ENCODE measurements at regions of chr1 and their contacts with region 1.

Region 1: GRCh38 chr1:36420836-36421664 is 23.3 kb upstream of the LSM10 start:
- DNase-seq: peak; percentile 89 to 93
- ATAC-seq: peak; percentile 88 to 91 (median 88)
- H3K4me3 ChIP-seq: peak overlapping the region; percentile 29
- H3K27ac ChIP-seq: peak overlapping the region; percentile 83
- H3K4me1 ChIP-seq: peaks cover 23% of the 10 kb centered on the region
- H3K27me3 ChIP-seq: no peaks in the 10 kb centered on the region
- CTCF ChIP-seq: peak; percentile 96

Region 2: GRCh38 chr1:36099681-36100341 is 321.2 kb before region 1 on chr1:
- intact Hi-C with region 1: loop called (anchors 2 to 10 kb)
- DNase-seq: peak; percentile 79 to 89
- ATAC-seq: peak; percentile 87 to 94 (median 90)
- H3K4me3 ChIP-seq: no peak overlapping the region
- H3K27ac ChIP-seq: no peak overlapping the region
- H3K4me1 ChIP-seq: peaks cover 3% of the 10 kb centered on the region
- H3K27me3 ChIP-seq: no peaks in the 10 kb centered on the region
- CTCF ChIP-seq: peak; percentile 86

Region 3: DNA sequence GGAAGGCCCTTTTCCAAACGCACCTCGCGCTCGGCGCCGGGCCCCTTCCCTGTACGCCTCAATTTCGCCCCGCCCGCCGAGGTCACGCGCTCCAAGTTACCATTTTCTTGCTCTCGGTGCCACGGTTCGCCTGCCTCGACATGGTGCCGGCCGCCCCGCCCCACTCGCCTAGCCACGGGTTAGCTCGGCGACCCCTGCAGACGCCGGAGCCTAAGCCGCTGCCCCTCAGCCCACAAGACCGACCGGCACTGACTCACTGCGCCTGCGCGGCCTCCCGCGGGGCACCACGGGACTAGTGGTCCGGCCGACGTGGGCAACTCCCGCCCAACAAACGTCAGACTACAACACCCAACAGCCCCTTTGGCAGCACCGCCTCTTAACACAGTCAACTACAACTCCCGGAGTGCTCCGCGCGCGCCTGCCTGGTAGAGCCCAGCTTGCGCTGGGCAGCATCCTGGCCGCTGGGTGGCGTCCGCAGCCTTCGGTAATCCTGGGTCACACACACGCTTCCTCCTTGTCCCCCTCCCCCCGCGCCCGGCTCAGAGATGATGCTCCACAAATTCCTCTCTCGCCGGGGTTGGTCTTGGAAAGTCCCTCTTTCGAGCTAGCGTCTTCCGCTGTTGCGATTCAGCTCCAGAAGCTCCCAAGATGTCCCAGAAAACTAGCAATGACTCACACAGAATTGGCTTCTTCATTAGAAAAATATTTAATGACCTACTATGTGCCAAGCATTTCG is 271.6 kb before region 1 on chr1 and contains the start of gene TRAPPC3:
- intact Hi-C with region 1: loop called in 1 of 2 experiments (anchors 5 kb)
- DNase-seq: peak; percentile 100
- ATAC-seq: peak; percentile 88 to 92 (median 90)
- H3K4me3 ChIP-seq: peak within 1 kb of the TSS; percentile 79
- H3K27ac ChIP-seq: peak within 1 kb of the TSS; percentile 93
- H3K4me1 ChIP-seq: peaks cover 39% of the 10 kb centered on the region
- H3K27me3 ChIP-seq: no peaks in the 10 kb centered on the region
- CTCF ChIP-seq: peak; percentile 87
- total RNA-seq, gene TRAPPC3: 34.8 to 44.4 (median 38.7) TPM

Region 4: GRCh38 chr1:36217670-36218069 is 203.4 kb before region 1 on chr1:
- intact Hi-C with region 1: loop called in 1 of 2 experiments (anchors 10 kb)
- DNase-seq: no peak
- ATAC-seq: peak; percentile 74 to 93 (median 82)
- H3K4me3 ChIP-seq: no peak overlapping the region
- H3K27ac ChIP-seq: peak overlapping the region; percentile 46
- H3K4me1 ChIP-seq: peaks cover under 1% of the 10 kb centered on the region
- H3K27me3 ChIP-seq: no peaks in the 10 kb centered on the region
- CTCF ChIP-seq: peak; percentile 39

Region 5: GRCh38 chr1:36306902-36307456 is 114.1 kb before region 1 on chr1:
- intact Hi-C with region 1: loop called in 1 of 2 experiments (anchors 5 kb)
- DNase-seq: peak; percentile 92 to 95
- ATAC-seq: peak; percentile 92 to 94 (median 92)
- H3K4me3 ChIP-seq: peak overlapping the region; percentile 73
- H3K27ac ChIP-seq: peak overlapping the region; percentile 79
- H3K4me1 ChIP-seq: peaks cover 8% of the 10 kb centered on the region
- H3K27me3 ChIP-seq: no peaks in the 10 kb centered on the region
- CTCF ChIP-seq: no peak

Region 6: GRCh38 chr1:36342481-36343478 is 78.3 kb before region 1 on chr1:
- intact Hi-C with region 1: loop called (anchors 2 to 5 kb)
- DNase-seq: peak; percentile 52 to 80
- ATAC-seq: peak; percentile 58 to 67 (median 64)
- H3K4me3 ChIP-seq: no peak overlapping the region
- H3K27ac ChIP-seq: peak overlapping the region; percentile 78
- H3K4me1 ChIP-seq: peaks cover 38% of the 10 kb centered on the region
- H3K27me3 ChIP-seq: no peaks in the 10 kb centered on the region
- CTCF ChIP-seq: peak; percentile 55

Region 7: GRCh38 chr1:36377791-36378492 is 43.1 kb before region 1 on chr1:
- intact Hi-C with region 1: no loop called
- DNase-seq: no peak
- ATAC-seq: no peak
- H3K4me3 ChIP-seq: no peak overlapping the region
- H3K27ac ChIP-seq: peak overlapping the region; percentile 65
- H3K4me1 ChIP-seq: peaks cover 86% of the 10 kb centered on the region
- H3K27me3 ChIP-seq: no peaks in the 10 kb centered on the region
- CTCF ChIP-seq: no peak

Measured in psoas muscle (tissue), 8 donors.